Ascending aorta (tissue), 2 donors: ENCODE measurements at regions of chr5 and their contacts with region 1.

Region 1: GRCh38 chr5:179023528-179024430 is at the start of gene ZNF879:
- DNase-seq: peak; percentile 58 to 97
- H3K4me3 ChIP-seq: peak within 1 kb of the TSS; percentile 67 to 88
- H3K27ac ChIP-seq: peak within 1 kb of the TSS; percentile 70 to 95
- H3K4me1 ChIP-seq: peaks cover 0 to 3% of the 10 kb centered on the region in 2 donors
- H3K27me3 ChIP-seq: no peaks in the 10 kb centered on the region
- CTCF ChIP-seq: no peak
- total RNA-seq, gene ZNF879: 38.8 TPM

Region 2: GRCh38 chr5:178732281-178732680 is 291.5 kb before region 1 on chr5:
- intact Hi-C with region 1: loop called (anchors 1 kb)
- DNase-seq: no peak
- H3K4me3 ChIP-seq: no peak overlapping the region
- H3K27ac ChIP-seq: no peak overlapping the region
- H3K4me1 ChIP-seq: peaks cover 2 to 3% of the 10 kb centered on the region in 2 donors
- H3K27me3 ChIP-seq: no peaks in the 10 kb centered on the region
- CTCF ChIP-seq: no peak

Region 3: GRCh38 chr5:178859625-178860531 is 163.9 kb before region 1 on chr5 and contains the start of gene ZNF354B:
- intact Hi-C with region 1: loop called (anchors 1 kb)
- DNase-seq: peak; percentile 77 to 95
- H3K4me3 ChIP-seq: peak within 1 kb of the TSS; percentile 89 to 93
- H3K27ac ChIP-seq: peak within 1 kb of the TSS; percentile 59 to 82
- H3K4me1 ChIP-seq: no peaks in the 10 kb centered on the region
- H3K27me3 ChIP-seq: no peaks in the 10 kb centered on the region
- CTCF ChIP-seq: peak in 1 of 3 experiments; percentile 17
- total RNA-seq, gene ZNF354B: 8.3 TPM

Region 4: GRCh38 chr5:178940569-178941360 is 83.0 kb before region 1 on chr5 and contains the start of gene ZNF454:
- intact Hi-C with region 1: loop called (anchors 2 kb)
- DNase-seq: peak; percentile 35 to 91
- H3K4me3 ChIP-seq: peak within 1 kb of the TSS; percentile 62 to 74
- H3K27ac ChIP-seq: peak within 1 kb of the TSS; percentile 73 to 84
- H3K4me1 ChIP-seq: peaks cover 0 to 4% of the 10 kb centered on the region in 2 donors
- H3K27me3 ChIP-seq: no peaks in the 10 kb centered on the region
- CTCF ChIP-seq: no peak
- total RNA-seq, gene ZNF454: 2.8 TPM

Region 5: GRCh38 chr5:179060116-179061008 is 36.6 kb after region 1 on chr5 and contains the start of gene ZNF354C:
- intact Hi-C with region 1: loop called (anchors 2 kb)
- DNase-seq: peak; percentile 29 to 93
- H3K4me3 ChIP-seq: peak within 1 kb of the TSS; percentile 73 to 92
- H3K27ac ChIP-seq: peak within 1 kb of the TSS; percentile 65 to 71
- H3K4me1 ChIP-seq: peaks cover 0 to 3% of the 10 kb centered on the region in 2 donors
- H3K27me3 ChIP-seq: no peaks in the 10 kb centered on the region
- CTCF ChIP-seq: no peak
- total RNA-seq, gene ZNF354C: 3.0 TPM

Region 6: GRCh38 chr5:179143446-179143845 is 119.7 kb after region 1 on chr5:
- intact Hi-C with region 1: no loop called
- DNase-seq: no peak
- H3K4me3 ChIP-seq: no peak overlapping the region
- H3K27ac ChIP-seq: no peak overlapping the region
- H3K4me1 ChIP-seq: no peaks in the 10 kb centered on the region
- H3K27me3 ChIP-seq: no peaks in the 10 kb centered on the region
- CTCF ChIP-seq: no peak

Region 7: DNA sequence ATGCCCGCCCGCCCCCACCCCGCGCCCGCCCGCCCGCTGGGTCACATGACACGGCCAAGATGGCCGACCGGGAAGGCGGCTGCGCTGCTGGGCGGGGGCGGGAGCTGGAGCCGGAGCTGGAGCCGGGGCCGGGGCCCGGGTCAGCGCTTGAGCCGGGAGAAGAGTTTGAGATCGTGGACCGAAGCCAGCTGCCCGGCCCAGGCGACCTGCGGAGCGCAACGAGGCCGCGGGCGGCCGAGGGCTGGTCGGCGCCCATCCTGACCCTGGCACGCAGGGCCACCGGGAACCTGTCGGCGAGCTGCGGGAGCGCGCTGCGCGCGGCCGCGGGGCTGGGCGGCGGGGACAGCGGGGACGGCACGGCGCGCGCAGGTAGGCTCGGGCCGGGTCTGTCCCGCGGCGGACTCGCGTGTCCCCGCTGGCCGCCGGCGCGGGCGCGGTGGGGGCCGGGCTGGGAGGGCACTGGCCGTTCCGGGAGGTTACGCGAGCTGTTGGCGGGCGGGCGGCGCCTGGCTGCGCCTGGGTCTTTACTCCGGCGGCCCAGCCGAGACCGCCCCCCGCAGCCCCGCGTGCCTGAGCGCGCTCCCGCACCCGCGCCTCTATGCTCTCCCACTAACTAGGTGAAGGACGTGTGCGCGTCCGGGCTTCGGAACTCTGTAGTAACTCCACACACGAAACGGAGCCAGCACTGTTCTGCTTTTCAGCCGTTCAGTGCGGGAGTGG is 526.9 kb after region 1 on chr5 and contains the start of gene RUFY1:
- intact Hi-C with region 1: loop called (anchors 1 kb)
- DNase-seq: peak; percentile 24 to 85
- H3K4me3 ChIP-seq: peak within 1 kb of the TSS; percentile 84 to 95
- H3K27ac ChIP-seq: peak within 1 kb of the TSS; percentile 92 to 98
- H3K4me1 ChIP-seq: peaks cover 6 to 19% of the 10 kb centered on the region in 2 donors
- H3K27me3 ChIP-seq: no peaks in the 10 kb centered on the region
- CTCF ChIP-seq: peak in 1 of 3 experiments; percentile 33
- total RNA-seq, gene RUFY1: 12.2 TPM